ENCODE measurements at regions of chr9 and their contacts with region 1.

Region 1: GRCh38 chr9:70602321-70603019 is 188.0 kb upstream of the KLF9 start:
- DNase-seq: peak; percentile 23
- H3K4me3 Mint-ChIP-seq: no peak overlapping the region
- H3K27ac Mint-ChIP-seq: no peak overlapping the region
- H3K4me1 Mint-ChIP-seq: peaks cover 5% of the 10 kb centered on the region
- H3K27me3 Mint-ChIP-seq: peaks cover 2% of the 10 kb centered on the region

Region 2: GRCh38 chr9:70080481-70081119 is 521.9 kb before region 1 on chr9:
- intact Hi-C with region 1: no loop called
- DNase-seq: no peak
- H3K4me3 Mint-ChIP-seq: no peak overlapping the region
- H3K27ac Mint-ChIP-seq: no peak overlapping the region
- H3K4me1 Mint-ChIP-seq: no peaks in the 10 kb centered on the region
- H3K27me3 Mint-ChIP-seq: peaks cover 2% of the 10 kb centered on the region

Region 3: DNA sequence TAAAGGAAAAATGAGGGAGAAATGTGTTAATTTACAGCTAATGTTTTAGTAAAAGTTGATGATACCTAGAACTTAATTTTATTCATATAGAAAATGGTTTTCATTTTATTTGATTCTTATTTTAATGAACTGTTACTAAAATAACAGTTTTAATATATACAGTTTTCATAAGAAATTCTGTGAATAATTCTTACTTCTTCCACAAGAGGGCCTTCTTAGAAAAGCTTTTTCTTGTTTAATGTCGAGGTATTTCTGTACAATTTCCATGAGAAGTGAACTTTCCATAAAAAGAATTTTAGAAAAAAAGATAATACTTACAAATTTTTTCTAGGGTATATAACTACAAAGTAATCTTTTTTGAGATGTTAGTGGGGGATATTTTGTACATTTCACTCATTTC is 261.9 kb before region 1 on chr9:
- intact Hi-C with region 1: loop called (anchors 1 kb)
- DNase-seq: no peak
- H3K4me3 Mint-ChIP-seq: no peak overlapping the region
- H3K27ac Mint-ChIP-seq: no peak overlapping the region
- H3K4me1 Mint-ChIP-seq: peaks cover 8% of the 10 kb centered on the region
- H3K27me3 Mint-ChIP-seq: no peaks in the 10 kb centered on the region

Region 4: GRCh38 chr9:70352802-70353201 is 249.7 kb before region 1 on chr9:
- intact Hi-C with region 1: loop called (anchors 1 kb)
- DNase-seq: no peak
- H3K4me3 Mint-ChIP-seq: no peak overlapping the region
- H3K27ac Mint-ChIP-seq: no peak overlapping the region
- H3K4me1 Mint-ChIP-seq: peaks cover 6% of the 10 kb centered on the region
- H3K27me3 Mint-ChIP-seq: no peaks in the 10 kb centered on the region

Region 5: DNA sequence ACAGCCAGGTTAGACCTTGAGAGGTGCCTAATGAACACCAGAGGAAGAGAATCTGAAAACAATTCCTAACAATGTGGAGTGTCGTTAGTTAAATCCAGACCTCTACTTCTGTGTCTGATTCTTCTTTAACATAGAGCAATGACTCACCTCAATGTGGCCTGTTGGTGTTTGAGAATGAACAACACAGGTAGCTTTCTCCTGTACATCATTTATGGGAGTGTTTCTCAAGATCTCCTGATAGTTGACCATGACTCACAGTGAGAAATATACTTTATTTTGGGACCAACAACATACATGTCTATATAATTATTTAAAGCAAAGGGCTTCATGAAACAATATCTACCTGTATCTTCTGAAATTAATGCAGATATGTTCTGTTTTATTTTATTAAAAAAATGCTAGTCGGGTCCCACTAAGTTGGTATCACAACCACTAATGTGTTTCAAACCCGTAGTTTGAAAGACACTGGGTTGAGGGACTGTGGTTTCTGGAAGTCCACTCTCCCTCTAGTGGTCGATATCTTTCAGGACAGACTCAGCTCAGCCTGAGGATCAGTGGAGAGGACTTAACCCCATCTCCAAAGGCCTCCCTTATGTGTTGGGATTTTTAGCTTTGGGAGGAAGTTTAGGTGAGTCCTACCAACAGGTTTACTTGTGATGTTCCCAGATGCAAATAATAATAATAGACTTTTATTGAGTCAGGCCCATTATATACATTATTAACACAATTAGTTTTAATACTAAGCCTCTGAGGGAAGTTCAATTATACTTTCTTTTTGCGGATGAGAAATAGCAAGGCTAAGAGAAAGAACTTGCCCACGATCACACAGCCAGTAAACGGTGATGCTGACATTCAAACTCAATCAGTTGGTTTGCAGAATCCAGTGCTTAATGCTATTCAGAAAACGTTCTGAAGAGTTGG is 118.0 kb before region 1 on chr9:
- intact Hi-C with region 1: loop called (anchors 5 kb)
- DNase-seq: no peak
- H3K4me3 Mint-ChIP-seq: no peak overlapping the region
- H3K27ac Mint-ChIP-seq: no peak overlapping the region
- H3K4me1 Mint-ChIP-seq: no peaks in the 10 kb centered on the region
- H3K27me3 Mint-ChIP-seq: no peaks in the 10 kb centered on the region

Region 6: DNA sequence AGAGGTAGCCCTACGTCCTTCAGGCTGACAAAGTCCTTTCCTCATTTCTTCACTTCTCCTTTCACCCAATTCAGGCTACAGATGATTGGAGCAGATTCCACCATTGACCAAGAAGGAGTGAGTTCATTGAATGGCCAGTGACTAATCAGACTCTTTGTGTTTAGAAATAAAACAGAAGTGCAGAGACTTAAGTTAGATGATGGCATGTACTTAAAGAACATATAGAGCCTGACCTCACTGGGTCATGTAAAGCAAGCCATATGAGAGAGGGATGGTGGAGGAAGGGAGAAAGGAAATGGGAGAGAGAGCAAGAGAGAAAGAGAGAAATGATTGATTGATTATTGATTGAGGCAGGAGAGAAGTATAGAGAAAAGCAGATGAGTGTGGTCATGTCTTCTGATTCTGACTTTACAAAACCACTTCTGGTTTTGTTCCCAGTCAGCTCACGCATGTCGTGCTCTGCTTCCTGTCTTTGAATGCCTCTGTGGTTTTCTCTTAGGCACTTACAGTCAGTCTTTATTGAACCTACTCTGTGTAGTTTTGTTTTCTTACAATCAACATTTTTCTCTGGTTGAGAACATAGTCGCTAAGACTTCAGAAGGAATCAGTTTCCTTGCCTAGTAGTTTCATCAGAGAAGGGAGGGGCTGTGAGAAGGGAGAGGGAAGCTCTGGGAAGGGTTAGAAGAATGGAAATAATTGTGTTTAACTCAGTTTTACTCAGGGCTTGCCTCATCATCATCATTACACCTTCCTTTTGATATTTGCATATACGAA is 38.9 kb before region 1 on chr9:
- intact Hi-C with region 1: loop called (anchors 5 kb)
- DNase-seq: peak; percentile 70
- H3K4me3 Mint-ChIP-seq: peak overlapping the region; percentile 69
- H3K27ac Mint-ChIP-seq: peak overlapping the region; percentile 89
- H3K4me1 Mint-ChIP-seq: peaks cover 72% of the 10 kb centered on the region
- H3K27me3 Mint-ChIP-seq: peaks cover 2% of the 10 kb centered on the region

Region 7: DNA sequence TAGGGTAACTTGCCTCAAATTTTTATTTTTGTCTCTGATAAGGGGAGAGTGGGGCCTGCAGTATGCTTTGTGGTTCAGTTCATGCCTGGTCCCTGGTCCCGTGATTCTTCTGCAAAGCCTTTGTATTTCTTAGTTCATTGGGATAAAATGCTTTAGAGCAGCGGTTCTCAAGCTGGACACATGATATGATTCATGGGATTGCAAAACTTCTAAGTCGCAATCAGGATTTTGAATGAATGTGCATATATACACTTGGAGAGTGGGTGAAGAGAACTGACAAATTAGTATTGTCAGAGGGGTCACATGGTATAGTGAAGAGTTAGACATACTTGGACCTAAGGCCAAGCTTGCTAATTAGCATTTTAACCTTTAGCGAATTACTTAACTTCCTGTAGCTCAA is 77.4 kb after region 1 on chr9:
- intact Hi-C with region 1: no loop called
- DNase-seq: no peak
- H3K4me3 Mint-ChIP-seq: no peak overlapping the region
- H3K27ac Mint-ChIP-seq: no peak overlapping the region
- H3K4me1 Mint-ChIP-seq: no peaks in the 10 kb centered on the region
- H3K27me3 Mint-ChIP-seq: peaks cover 13% of the 10 kb centered on the region